Posterior vena cava (tissue), 2 donors: ENCODE measurements at regions of chr15 and their contacts with region 1.

Region 1: DNA sequence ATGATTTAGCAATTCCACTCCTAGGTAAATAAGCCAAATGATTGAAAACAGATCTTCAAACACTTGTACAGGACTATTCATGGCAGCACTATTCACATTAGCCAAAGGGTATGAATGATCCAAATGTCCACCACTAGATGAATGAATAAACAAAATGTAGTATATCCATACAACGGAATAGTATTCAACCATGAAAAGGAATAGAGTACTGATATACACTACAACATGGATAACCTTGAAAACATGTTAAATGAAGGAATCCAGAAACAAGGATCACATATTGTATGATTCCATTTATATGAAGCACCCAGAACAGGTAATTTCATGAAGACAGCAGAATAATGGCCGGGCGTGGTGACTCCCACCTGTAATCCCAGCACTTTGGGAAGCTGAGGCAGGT is 78.2 kb upstream of the IGF1R start:
- DNase-seq: peak; percentile 30

Region 2: GRCh38 chr15:98051734-98052133 is 518.4 kb before region 1 on chr15:
- intact Hi-C with region 1: no loop called
- DNase-seq: no peak

Region 3: GRCh38 chr15:98294126-98294525 is 276.0 kb before region 1 on chr15:
- intact Hi-C with region 1: no loop called
- DNase-seq: no peak

Region 4: DNA sequence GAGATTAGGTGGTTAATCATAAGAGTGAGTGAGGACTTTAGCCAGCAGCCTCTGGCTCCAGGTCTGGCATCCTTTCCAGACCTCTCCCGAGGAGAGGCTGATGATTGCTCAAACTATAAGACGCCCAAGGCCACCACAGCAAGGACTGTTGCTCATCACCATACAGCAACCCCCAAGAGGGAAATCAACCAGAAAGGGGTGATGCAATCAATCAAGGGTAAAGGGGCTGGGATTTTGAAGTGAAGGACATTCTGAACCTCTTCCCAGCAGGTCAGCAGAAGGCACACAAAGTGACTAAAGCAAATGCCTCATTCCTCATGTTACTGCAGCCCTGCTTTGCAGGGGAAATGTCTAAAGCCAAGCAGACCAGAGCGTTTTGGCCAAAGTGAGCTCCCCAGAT is 169.1 kb before region 1 on chr15:
- intact Hi-C with region 1: no loop called
- DNase-seq: no peak

Region 5: GRCh38 chr15:99657996-99658395 is 1087.9 kb after region 1 on chr15:
- intact Hi-C with region 1: no loop called
- DNase-seq: no peak

Region 6: GRCh38 chr15:99719096-99719541 is 1149.0 kb after region 1 on chr15:
- intact Hi-C with region 1: loop called in 1 of 2 experiments (anchors 5 kb)
- DNase-seq: no peak